ENCODE measurements at regions of chr6 and their contacts with region 1.

Region 1: DNA sequence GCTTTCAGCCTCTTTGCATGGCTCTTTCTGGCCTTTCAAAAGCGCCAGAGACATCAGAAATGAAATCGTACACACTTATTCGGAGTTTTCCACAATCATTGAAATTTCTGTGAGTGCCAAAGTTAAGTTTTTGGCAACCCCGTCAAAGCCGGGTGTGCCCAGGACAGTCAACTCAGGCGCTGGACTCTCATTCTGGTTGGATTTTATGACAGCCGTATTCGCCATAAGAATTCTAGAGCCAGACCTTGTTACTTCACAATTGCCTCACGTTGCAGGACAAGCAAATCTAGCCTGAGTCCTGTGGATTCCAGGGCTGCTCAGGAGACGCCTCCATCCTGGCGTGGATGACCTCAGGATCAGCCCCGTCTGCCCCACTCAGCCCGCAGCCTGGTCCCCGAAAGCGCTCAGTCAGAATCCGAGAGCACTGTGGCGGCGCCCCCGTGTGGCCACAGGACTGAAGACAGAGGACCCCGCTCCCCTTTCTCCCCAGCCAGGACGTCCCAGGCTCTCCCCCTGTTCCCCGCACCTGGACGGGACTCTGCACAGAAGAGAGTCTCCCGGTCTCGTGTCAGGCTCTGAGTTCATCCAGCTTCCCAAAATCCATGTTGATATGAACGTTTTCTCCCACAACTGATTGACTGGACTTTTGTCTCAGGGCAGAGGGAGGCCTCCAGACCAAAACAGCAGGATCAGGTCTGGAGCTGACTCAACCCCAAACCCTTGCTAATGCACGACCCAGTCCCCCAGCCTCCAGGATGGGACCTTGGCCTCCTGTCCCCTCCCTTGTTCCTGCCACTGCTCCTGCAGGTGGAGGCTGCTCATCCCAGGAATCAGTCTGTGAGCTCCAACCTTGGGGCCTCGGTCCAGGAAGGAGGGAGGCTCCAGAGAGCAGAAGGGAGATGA is 38.2 kb downstream of the MICA start:
- DNase-seq: peak; percentile 32
- H3K4me3 ChIP-seq: peak overlapping the region in 1 of 3 experiments; percentile 35
- H3K27ac ChIP-seq: no peak overlapping the region
- H3K4me1 ChIP-seq: no peaks in the 10 kb centered on the region
- H3K27me3 ChIP-seq: peaks cover 3% of the 10 kb centered on the region
- CTCF ChIP-seq: peak; percentile 65 to 92

Region 2: DNA sequence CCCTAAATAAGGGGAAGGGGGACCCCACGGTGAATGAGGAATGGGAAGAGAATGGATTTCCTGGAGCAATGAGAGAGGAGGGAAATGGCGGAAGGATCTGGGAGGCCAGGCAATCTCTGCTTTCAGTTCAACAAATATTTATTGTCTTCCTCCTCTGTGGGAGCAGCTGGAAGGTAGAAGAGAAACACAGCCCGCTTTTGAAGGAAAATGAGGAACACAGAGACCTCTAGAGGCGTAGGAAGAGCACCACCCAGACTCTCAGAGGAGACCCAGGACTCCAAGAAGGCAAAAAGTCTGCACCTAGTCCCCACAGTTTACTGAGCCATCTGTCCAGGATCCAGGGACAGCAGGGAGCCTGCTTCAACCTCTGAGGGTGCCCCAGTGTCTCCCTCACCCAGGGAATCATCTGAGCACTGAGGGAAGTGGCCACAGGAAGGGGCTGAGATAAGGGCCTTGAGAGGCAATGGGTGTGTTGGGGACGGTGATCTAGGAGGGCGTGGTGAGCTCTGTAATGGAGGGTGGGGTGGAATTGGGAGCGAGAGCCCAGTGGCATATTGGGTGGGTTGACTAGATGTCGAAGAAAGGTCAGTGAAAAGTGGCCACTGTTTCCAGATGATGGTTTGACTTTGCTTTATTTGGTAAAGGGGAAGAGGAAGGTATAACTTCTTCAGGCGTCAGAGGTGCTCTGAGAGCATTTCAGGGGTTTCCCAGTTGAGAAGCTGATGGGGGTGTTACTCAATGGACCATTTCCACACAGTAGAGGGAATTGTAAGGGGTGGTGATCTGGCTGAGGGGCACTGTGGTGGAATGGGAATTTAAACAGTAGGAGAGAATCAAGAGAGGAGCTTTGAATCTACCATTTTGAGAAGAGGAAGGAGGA is 326.4 kb before region 1 on chr6:
- CTCF ChIA-PET with region 1: no interaction called
- dilution Hi-C with region 1: loop called (anchors 10 kb)
- in situ Hi-C with region 1: no loop called
- intact Hi-C with region 1: no loop called
- DNase-seq: peak; percentile 24
- H3K4me3 ChIP-seq: peak overlapping the region; percentile 31 to 52 (median 39)
- H3K27ac ChIP-seq: peak overlapping the region; percentile 91
- H3K4me1 ChIP-seq: peaks cover 39% of the 10 kb centered on the region
- H3K27me3 ChIP-seq: no peaks in the 10 kb centered on the region
- CTCF ChIP-seq: peak in 1 of 2 donors; percentile 52

Region 3: DNA sequence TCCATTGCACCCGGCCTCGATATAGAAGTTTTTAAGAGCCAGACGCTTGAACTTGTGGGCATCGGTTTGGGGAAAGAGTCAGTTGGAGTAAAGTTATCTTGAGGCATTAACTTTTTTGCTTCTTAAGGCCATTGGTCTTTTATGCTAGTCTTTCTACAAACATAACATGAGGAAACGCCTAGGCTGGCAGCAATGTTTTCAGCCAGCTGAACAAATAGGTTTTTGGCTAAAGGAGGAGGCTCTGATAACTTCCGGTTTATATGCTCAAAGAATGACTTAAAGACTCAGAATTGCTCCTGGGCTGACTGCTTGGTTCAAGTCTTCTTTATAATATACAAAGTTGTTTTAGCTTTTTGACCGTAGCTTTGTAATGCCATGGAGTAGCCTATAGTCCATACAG is 215.9 kb before region 1 on chr6:
- CTCF ChIA-PET with region 1: no interaction called
- dilution Hi-C with region 1: loop called (anchors 5 kb)
- in situ Hi-C with region 1: no loop called
- intact Hi-C with region 1: no loop called
- DNase-seq: no peak
- H3K4me3 ChIP-seq: no peak overlapping the region
- H3K27ac ChIP-seq: no peak overlapping the region
- H3K4me1 ChIP-seq: no peaks in the 10 kb centered on the region
- H3K27me3 ChIP-seq: peaks cover 2% of the 10 kb centered on the region
- CTCF ChIP-seq: no peak

Region 4: GRCh38 chr6:31396422-31397152 is 45.0 kb before region 1 on chr6:
- CTCF ChIA-PET with region 1: interaction called, 8 read pairs
- dilution Hi-C with region 1: no loop called
- in situ Hi-C with region 1: loop called (anchors 5 kb)
- intact Hi-C with region 1: loop called (anchors 1 kb)
- DNase-seq: peak; percentile 67
- H3K4me3 ChIP-seq: no peak overlapping the region
- H3K27ac ChIP-seq: no peak overlapping the region
- H3K4me1 ChIP-seq: peaks cover 1% of the 10 kb centered on the region
- H3K27me3 ChIP-seq: no peaks in the 10 kb centered on the region
- CTCF ChIP-seq: peak; percentile 80 to 85

Region 5: DNA sequence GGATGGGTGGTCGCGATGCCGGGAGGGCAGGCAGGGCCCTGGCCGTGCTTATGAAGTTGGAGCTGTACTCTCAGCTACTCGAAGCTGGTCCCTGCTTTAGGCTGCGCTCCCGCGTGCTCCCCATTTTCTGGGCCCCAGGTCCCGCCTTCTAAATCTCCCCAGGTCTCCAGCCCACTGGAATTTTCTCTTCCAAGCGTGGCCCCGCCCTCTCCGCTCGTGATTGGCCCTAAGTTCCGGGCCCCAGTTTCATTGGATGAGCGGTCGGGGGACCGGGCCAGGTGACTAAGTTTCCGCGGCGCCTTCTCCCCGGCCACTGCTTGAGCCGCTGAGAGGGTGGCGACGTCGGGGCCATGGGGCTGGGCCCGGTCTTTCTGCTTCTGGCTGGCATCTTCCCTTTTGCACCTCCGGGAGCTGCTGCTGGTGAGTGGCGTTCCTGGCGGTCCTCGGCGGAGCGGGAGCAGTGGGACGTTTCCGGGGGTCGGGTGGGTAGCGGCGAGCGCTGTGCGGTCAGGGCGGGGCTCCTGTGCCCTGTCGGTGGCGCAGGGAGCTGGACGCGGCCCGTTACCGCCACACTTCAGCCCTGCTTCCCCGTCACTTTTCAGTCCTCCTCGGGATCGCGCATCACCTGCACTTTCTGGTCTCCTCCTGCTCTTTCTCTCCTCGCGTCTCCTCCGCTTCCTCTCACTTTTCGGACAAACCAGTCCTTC is 38.2 kb before region 1 on chr6 and contains the start of gene MICA:
- CTCF ChIA-PET with region 1: interaction called, 3 read pairs
- dilution Hi-C with region 1: no loop called
- in situ Hi-C with region 1: loop called (anchors 5 kb)
- intact Hi-C with region 1: no loop called
- DNase-seq: peak; percentile 95
- H3K4me3 ChIP-seq: peak within 1 kb of the TSS; percentile 87 to 90 (median 88)
- H3K27ac ChIP-seq: peak within 1 kb of the TSS; percentile 95
- H3K4me1 ChIP-seq: peaks cover 19% of the 10 kb centered on the region
- H3K27me3 ChIP-seq: no peaks in the 10 kb centered on the region
- CTCF ChIP-seq: no peak
- total RNA-seq, gene MICA: 32.3 to 51.2 TPM

Region 6: DNA sequence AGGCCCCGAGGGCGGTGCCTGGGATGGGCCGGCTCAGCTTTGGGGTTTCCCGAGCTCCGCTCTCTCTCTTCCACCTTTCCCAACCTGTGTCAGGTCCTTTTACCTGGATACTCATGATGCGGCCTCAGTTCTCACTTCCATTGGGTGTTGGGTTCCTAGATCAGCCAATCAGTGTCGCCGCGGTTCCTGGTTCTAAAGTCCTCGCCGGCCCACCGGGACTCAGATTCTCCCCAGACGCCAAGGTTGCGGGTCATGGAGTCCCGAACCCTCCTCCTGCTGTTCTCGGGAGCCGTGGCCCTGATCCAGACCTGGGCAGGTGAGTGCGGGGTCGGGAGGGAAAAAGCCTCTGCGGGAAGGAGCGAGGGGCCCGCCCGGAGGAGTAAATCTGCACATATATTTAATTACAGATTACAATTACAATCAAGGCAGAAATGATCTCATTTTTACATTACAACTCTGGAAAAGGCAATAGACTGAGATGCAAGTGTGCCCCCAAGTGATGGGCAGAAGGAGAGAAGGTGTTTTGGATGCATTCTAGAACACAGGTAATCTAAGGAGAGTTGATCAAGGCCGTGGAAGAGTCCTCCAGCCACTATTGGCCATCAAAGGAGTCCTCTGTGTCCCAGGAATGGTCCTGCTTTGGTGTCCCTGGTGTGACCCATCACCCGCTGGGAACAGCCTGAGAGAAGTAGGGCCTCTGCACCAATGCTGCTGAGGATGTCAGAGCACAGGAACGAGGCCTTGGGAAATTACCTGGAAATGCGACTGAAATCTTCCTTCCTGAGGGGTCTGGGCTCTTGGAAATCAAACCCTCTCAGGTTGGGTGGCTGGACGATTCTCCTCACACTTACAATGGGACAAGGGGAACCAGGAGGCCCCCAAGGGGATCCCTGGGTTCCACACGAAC is 21.6 kb after region 1 on chr6:
- CTCF ChIA-PET with region 1: no interaction called
- dilution Hi-C with region 1: no loop called
- in situ Hi-C with region 1: no loop called
- intact Hi-C with region 1: loop called (anchors 2 kb)
- DNase-seq: peak; percentile 93
- H3K4me3 ChIP-seq: peak overlapping the region; percentile 56 to 66 (median 58)
- H3K27ac ChIP-seq: peak overlapping the region; percentile 52
- H3K4me1 ChIP-seq: peaks cover 12% of the 10 kb centered on the region
- H3K27me3 ChIP-seq: no peaks in the 10 kb centered on the region
- CTCF ChIP-seq: no peak

Region 7: GRCh38 chr6:31513456-31514165 is 72.0 kb after region 1 on chr6:
- CTCF ChIA-PET with region 1: no interaction called
- dilution Hi-C with region 1: no loop called
- in situ Hi-C with region 1: no loop called
- intact Hi-C with region 1: no loop called
- DNase-seq: no peak
- H3K4me3 ChIP-seq: no peak overlapping the region
- H3K27ac ChIP-seq: no peak overlapping the region
- H3K4me1 ChIP-seq: no peaks in the 10 kb centered on the region
- H3K27me3 ChIP-seq: no peaks in the 10 kb centered on the region
- CTCF ChIP-seq: no peak

Region 8: DNA sequence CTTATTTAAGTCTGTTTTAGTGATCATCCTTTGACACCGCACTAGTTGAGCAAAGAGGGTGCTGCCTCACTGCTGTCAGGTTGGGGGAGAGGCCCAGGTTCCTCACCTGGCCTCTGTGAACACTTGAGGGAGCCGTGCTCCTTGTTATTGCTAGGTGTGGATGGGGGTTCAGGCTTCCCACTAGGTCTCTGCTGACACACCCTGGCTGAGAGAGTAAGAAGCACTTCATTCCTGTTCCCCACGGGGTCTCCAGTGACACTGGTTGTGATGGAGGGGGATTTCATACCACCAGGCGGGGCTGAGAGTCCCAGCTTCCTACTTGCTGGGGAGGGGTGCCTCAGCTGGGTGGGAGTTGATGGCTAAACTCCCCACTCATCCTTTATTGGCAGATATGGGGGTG is 793.3 kb after region 1 on chr6:
- CTCF ChIA-PET with region 1: no interaction called
- dilution Hi-C with region 1: no loop called
- in situ Hi-C with region 1: no loop called
- intact Hi-C with region 1: no loop called
- DNase-seq: no peak
- H3K4me3 ChIP-seq: no peak overlapping the region
- H3K27ac ChIP-seq: no peak overlapping the region
- H3K4me1 ChIP-seq: no peaks in the 10 kb centered on the region
- H3K27me3 ChIP-seq: no peaks in the 10 kb centered on the region
- CTCF ChIP-seq: peak in 1 of 2 donors; percentile 10

Measured in mammary epithelial cell (primary cell).